Activated CD8-positive, alpha-beta memory T cell treated with anti-CD3 and anti-CD28 coated beads, Interleukin-2, amount 10 ng/mL, durations not matched to agents 7 days and 5 days (primary cell): ENCODE measurements at regions of chr10 and their contacts with region 1.

Region 1: DNA sequence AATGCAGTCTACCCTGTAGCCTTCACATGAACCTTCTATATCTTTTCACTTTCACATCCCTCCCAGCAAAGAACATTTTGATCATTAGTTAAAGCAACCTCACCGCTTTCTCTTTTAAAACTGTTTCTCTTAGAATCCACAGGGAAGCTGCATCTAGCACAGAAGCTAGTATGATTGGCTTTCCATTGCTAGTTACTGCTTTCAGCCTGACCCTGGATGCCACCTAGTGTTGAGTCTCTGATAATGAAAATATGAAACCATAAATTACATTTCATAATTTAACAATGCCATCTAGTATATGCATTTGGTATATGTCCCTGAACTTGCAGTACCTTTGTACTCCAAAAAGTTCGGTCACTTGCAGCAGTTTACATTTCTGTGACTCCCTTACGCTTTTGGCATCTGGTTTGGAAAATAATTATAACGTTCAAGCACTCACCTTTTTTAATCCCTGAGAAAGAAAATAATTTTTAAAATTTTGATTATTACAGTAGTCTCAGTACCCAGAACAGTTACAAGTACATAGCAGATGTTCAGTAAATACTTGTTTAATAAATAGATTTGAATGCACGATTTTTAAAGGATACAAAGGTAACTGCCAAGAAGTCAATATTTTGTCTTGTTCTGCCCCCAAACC is 22.7 kb downstream of the CISD1 start:
- DNase-seq: peak; percentile 41
- ATAC-seq: peak; percentile 61
- H3K4me3 Mint-ChIP-seq: no peak overlapping the region
- H3K27ac Mint-ChIP-seq: no peak overlapping the region
- H3K4me1 Mint-ChIP-seq: peaks cover 1% of the 10 kb centered on the region
- H3K27me3 Mint-ChIP-seq: no peaks in the 10 kb centered on the region

Region 2: GRCh38 chr10:58177362-58177947 is 114.2 kb before region 1 on chr10:
- CTCF ChIA-PET with region 1: interaction called, 69 read pairs
- DNase-seq: no peak
- ATAC-seq: no peak
- H3K4me3 Mint-ChIP-seq: no peak overlapping the region
- H3K27ac Mint-ChIP-seq: no peak overlapping the region
- H3K4me1 Mint-ChIP-seq: no peaks in the 10 kb centered on the region
- H3K27me3 Mint-ChIP-seq: peaks cover 2% of the 10 kb centered on the region

Region 3: DNA sequence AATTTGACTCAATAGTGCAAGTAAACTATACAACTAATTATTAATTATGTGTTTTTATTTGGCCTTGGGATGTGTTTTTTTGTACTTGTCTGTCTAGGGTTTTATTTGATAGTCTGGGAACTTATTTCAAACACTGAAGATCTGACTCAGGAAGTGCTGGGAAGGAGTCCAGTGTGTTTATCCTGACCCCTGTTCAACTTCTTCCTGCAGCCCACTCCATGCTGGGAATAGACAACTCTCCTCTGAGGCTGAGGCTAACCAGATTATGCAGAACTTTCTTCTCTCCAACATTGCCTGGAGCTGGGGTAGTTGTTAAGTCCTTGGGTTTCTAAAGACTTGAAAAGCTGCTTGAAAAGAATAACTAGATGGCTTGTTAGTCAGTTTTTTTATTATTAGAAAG is 15.7 kb before region 1 on chr10:
- CTCF ChIA-PET with region 1: interaction called, 14 read pairs
- DNase-seq: no peak
- ATAC-seq: no peak
- H3K4me3 Mint-ChIP-seq: no peak overlapping the region
- H3K27ac Mint-ChIP-seq: no peak overlapping the region
- H3K4me1 Mint-ChIP-seq: peaks cover 19% of the 10 kb centered on the region
- H3K27me3 Mint-ChIP-seq: no peaks in the 10 kb centered on the region

Region 4: GRCh38 chr10:58326967-58327381 is 35.3 kb after region 1 on chr10:
- CTCF ChIA-PET with region 1: no interaction called
- DNase-seq: no peak
- ATAC-seq: no peak
- H3K4me3 Mint-ChIP-seq: no peak overlapping the region
- H3K27ac Mint-ChIP-seq: no peak overlapping the region
- H3K4me1 Mint-ChIP-seq: peaks cover 10% of the 10 kb centered on the region
- H3K27me3 Mint-ChIP-seq: peaks cover 7% of the 10 kb centered on the region

Region 5: GRCh38 chr10:58360391-58361004 is 68.8 kb after region 1 on chr10:
- CTCF ChIA-PET with region 1: no interaction called
- DNase-seq: no peak
- ATAC-seq: no peak
- H3K4me3 Mint-ChIP-seq: no peak overlapping the region
- H3K27ac Mint-ChIP-seq: no peak overlapping the region
- H3K4me1 Mint-ChIP-seq: peaks cover 19% of the 10 kb centered on the region
- H3K27me3 Mint-ChIP-seq: no peaks in the 10 kb centered on the region